Right ventricle myocardium inferior (tissue), 1 donor: ENCODE measurements at regions of chr12 and their contacts with region 1.

Region 1: DNA sequence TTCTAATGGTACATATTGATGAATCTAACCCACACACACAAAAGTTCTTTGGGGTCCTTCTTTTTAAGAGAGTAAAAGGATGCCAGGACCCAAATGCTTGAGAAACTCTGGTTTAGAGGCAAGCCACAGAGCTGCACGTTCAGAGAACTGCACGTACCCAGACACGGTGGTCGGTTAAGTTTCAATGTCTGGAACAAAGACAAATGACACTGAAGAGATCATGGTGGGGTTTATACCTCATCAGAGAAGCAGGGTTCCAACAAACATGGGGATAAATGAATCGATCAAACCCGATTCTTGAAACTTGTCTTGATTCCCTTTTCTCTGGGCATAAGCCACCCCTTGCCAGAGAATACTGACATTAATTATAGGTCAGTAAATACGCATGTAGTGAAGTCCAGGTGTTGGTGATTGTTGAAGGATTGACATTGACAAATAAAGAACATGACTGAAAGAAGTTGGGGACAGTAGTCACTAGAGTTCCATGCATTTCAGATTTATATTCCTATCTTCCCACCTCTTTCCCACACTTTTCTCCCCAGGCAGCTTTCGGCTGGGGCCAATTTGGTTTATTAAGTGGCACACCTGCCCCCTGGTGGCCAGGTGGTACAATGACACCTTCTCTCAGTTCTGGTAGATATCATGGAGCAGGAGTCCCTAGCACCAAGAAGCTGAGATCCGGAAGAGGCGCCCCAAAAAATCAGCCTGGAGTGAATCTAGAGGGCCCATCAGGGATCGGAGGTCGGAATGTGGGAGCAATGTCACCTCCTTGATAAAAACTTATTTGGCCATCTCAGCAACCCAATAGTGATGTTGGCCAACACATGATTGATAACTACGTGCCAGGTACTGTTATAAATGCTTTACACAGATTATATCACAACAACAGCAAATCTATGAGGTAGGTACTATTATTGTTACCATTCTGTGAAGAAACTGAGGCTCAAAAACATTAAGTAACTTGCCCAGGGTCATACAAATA is 17.8 kb upstream of the HDAC7 start:
- DNase-seq: peak; percentile 83
- ATAC-seq: peak; percentile 76

Region 2: GRCh38 chr12:47779301-47779942 is 58.1 kb before region 1 on chr12:
- intact Hi-C with region 1: loop called (anchors 2 kb)
- DNase-seq: peak; percentile 92
- ATAC-seq: peak; percentile 80

Region 3: GRCh38 chr12:47797441-47797840 is 40.0 kb before region 1 on chr12:
- intact Hi-C with region 1: loop called (anchors 1 kb)
- DNase-seq: no peak
- ATAC-seq: peak; percentile 18

Region 4: DNA sequence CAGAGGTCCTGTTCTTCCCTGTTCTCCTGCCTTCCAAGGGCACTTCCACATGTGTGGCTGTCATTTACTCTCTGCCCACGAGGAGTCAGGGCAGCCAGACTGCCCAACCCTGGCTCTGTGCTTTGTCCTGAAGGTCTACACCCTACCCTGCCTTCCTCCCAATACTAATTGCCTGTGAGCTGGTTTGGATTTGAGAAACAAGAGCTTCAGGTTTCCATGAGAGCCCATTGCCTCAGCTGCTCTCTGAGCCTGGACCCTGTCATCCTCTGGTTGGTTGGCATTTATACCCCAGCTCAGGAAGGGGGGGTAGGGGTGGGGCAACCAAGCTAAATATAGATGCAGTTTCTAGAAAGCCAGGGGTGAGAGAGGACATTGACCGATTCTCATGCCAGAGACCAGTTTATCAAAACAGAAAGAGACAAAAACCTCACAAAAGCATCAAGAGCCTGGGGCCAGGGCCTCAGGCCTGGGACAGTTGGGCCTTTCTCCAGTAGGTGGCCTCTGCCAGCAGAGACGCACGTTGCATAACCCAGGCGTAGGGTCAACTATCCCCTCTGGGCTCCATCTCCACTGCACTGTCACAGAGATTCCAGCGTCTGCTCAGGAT is 32.8 kb after region 1 on chr12:
- intact Hi-C with region 1: no loop called
- DNase-seq: peak; percentile 77
- ATAC-seq: peak; percentile 89

Region 5: DNA sequence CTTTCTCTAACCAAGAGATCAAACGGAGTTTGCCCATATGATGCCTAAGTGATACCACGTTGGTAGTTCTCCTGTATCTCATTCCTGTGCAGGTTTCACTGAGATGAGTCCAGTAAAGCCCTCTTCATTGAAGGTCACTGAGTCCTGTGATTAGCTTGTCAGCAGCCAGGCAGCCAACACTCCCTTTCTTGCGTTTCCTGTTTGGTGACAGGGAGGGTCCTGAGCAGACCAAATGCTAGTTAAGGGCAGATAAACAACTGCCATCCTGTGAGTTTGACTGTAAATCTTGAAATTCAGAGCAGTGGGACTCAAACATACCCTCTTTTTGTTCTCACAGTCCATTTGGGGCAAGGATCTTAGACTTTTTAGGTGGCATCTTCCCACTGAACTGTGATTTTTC is 473.8 kb after region 1 on chr12:
- intact Hi-C with region 1: no loop called
- DNase-seq: no peak
- ATAC-seq: no peak